ENCODE measurements at regions of chr22 and their contacts with region 1.

Region 1: GRCh38 chr22:42533638-42533977 is 14.0 kb upstream of the RRP7A start:
- DNase-seq: no peak
- ATAC-seq: no peak
- H3K4me3 Mint-ChIP-seq: peak overlapping the region; percentile 81
- H3K27ac Mint-ChIP-seq: peak overlapping the region; percentile 94
- H3K4me1 Mint-ChIP-seq: peaks cover 66% of the 10 kb centered on the region
- H3K27me3 Mint-ChIP-seq: no peaks in the 10 kb centered on the region
- CTCF ChIP-seq: no peak

Region 2: DNA sequence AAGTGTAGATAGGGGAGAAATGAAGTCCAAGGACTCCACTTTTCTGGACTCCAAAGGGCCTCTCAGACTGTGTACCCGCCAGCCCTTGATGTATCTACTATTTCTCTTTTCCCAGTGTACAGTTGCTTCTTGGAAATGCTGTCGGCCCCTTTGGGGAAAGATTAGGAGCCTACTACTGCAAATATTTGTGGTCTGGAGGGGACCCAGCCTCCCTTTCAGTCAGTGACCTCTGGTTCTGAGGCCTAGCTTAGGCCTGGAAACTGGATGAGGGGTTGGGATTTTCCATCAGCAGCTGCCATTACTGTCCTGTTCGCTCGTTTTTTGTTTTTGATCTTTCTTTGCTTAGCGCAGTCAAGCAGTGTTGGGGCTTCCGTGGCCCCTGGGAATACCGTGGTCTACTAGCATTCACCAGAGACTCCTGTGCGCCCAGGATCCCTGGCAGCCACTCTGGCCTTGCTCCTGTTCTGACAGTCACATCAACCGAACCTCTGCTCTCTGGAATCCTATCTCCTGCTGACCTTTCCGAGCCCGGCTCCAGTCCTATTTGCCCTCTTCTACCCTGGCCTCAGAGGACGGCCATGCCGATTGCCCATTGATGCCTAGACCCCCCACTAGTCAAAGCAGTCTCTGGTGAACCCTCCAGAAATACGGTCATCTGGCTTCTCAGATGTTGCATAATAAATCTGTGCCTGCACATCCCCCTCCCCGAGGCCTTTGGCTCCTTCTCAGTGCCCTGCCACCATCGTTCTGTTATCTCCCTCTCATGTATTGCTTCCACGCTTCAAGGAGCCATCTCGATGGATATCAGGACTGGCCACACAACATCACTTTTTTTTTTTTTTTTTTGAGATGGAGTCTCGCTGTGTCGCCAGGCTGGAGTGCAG is 12.7 kb before region 1 on chr22:
- CTCF ChIA-PET with region 1: no interaction called
- POLR2A ChIA-PET with region 1: interaction called, 6 read pairs
- intact Hi-C with region 1: loop called (anchors 2 kb)
- DNase-seq: no peak
- ATAC-seq: no peak
- H3K4me3 Mint-ChIP-seq: peak overlapping the region; percentile 59
- H3K27ac Mint-ChIP-seq: no peak overlapping the region
- H3K4me1 Mint-ChIP-seq: peaks cover 18% of the 10 kb centered on the region
- H3K27me3 Mint-ChIP-seq: no peaks in the 10 kb centered on the region
- CTCF ChIP-seq: no peak

Region 3: DNA sequence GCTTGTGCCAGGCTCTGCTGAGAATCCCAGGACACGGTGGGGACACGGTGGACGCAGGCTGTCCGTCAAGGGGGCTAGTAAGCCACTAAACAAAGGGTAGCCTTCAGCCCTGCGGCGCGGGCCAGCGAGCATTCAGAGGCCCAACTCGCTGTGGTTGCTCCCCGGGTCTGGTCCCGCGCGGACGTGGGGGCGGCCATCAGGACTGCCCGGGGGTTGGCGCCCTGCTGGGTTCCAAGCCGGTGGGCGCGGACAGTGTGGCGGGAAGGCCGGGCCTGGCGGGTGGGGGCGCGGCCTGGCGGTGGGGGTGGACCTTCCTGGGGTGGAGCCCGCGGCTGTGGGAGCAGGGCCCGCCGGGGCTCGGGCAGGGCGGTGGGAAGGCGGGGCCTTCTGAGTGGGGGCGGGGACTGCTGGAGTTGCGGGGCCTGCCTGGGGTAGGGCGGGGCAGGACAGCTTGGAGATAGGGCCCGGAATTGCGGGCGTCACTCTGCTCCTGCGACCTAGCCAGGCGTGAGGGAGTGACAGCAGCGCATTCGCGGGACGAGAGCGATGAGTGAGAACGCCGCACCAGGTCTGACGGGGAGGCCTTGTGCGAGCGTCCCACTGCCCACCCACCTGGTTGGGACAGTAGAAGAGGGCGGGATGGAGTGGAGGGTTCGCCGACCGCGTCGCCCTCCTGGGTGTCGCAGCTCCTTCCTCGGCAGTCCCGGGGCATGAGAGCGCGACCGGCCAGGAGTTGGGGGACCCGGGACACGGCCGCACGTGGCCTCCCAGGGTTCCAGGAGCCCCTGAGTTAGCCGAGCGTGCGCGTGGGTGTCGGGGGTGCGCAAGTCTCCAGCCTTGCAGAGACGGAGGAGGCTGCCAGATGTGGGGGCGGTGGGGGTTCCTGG is 20.1 kb after region 1 on chr22 and contains the start of gene SERHL2:
- CTCF ChIA-PET with region 1: interaction called, 8 read pairs
- POLR2A ChIA-PET with region 1: interaction called, 28 read pairs
- intact Hi-C with region 1: loop called (anchors 1 kb)
- DNase-seq: peak; percentile 97
- ATAC-seq: peak; percentile 95
- H3K4me3 Mint-ChIP-seq: peak within 1 kb of the TSS; percentile 86
- H3K27ac Mint-ChIP-seq: peak within 1 kb of the TSS; percentile 80
- H3K4me1 Mint-ChIP-seq: peaks cover 52% of the 10 kb centered on the region
- H3K27me3 Mint-ChIP-seq: no peaks in the 10 kb centered on the region
- CTCF ChIP-seq: no peak
- total RNA-seq, gene SERHL2: 0.91 and 1.7 TPM in 2 replicates

Region 4: GRCh38 chr22:42561516-42562237 is 28.1 kb after region 1 on chr22:
- CTCF ChIA-PET with region 1: no interaction called
- POLR2A ChIA-PET with region 1: interaction called, 10 read pairs
- intact Hi-C with region 1: no loop called
- DNase-seq: no peak
- ATAC-seq: no peak
- H3K4me3 Mint-ChIP-seq: no peak overlapping the region
- H3K27ac Mint-ChIP-seq: no peak overlapping the region
- H3K4me1 Mint-ChIP-seq: peaks cover 24% of the 10 kb centered on the region
- H3K27me3 Mint-ChIP-seq: no peaks in the 10 kb centered on the region
- CTCF ChIP-seq: no peak

Region 5: GRCh38 chr22:42581762-42582716 is 48.4 kb after region 1 on chr22:
- CTCF ChIA-PET with region 1: no interaction called
- POLR2A ChIA-PET with region 1: interaction called, 4 read pairs
- intact Hi-C with region 1: loop called (anchors 1 kb)
- DNase-seq: peak; percentile 79
- ATAC-seq: peak; percentile 87
- H3K4me3 Mint-ChIP-seq: peak overlapping the region; percentile 95
- H3K27ac Mint-ChIP-seq: peak overlapping the region; percentile 75
- H3K4me1 Mint-ChIP-seq: peaks cover 14% of the 10 kb centered on the region
- H3K27me3 Mint-ChIP-seq: no peaks in the 10 kb centered on the region
- CTCF ChIP-seq: no peak

Region 6: GRCh38 chr22:42635531-42635930 is 101.9 kb after region 1 on chr22:
- CTCF ChIA-PET with region 1: no interaction called
- POLR2A ChIA-PET with region 1: interaction called, 10 read pairs
- intact Hi-C with region 1: no loop called
- DNase-seq: no peak
- ATAC-seq: no peak
- H3K4me3 Mint-ChIP-seq: no peak overlapping the region
- H3K27ac Mint-ChIP-seq: no peak overlapping the region
- H3K4me1 Mint-ChIP-seq: peaks cover 9% of the 10 kb centered on the region
- H3K27me3 Mint-ChIP-seq: no peaks in the 10 kb centered on the region
- CTCF ChIP-seq: no peak

Measured in activated B cell treated with CpG ODN at 0.5 μM for 24 hours (primary cell).